ENCODE measurements at regions of chr14 and their contacts with region 1.

Region 1: DNA sequence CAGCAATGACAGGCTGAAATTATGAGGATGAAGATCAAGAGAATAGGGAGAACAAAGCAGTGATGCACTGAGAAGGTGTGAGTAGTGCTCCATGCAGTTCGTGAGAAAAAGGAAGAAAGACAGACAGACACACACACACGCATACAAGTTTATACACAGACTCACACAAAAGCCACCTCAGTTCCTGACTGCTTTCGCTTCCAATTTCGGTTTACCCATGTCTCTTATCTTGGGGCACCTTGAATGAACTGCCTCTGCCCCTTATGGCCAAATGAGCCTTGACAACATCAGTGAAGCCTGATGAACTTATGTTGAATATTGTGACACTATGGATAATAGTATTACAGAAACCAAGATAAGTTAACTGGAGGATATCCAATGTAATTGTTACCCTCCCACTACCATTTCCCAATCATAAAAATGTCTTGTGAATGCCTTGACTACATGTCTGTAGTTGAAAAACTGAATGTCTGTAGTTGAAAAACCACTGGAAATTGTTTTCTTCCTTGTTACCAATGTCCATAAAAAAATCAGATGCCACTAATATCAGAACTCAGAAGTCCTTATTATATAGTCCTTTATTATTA is 380.4 kb upstream of the DDHD1 start:
- DNase-seq: no peak
- H3K4me3 ChIP-seq: no peak overlapping the region
- H3K27ac ChIP-seq: no peak overlapping the region
- H3K4me1 ChIP-seq: no peaks in the 10 kb centered on the region
- H3K27me3 ChIP-seq: no peaks in the 10 kb centered on the region
- CTCF ChIP-seq: no peak
- POLR2A ChIP-seq: no peak

Region 2: GRCh38 chr14:53355581-53356112 is 177.8 kb before region 1 on chr14:
- intact Hi-C with region 1: no loop called
- DNase-seq: no peak
- H3K4me3 ChIP-seq: no peak overlapping the region
- H3K27ac ChIP-seq: peak overlapping the region in 1 of 8 donors; percentile 1
- H3K4me1 ChIP-seq: no peaks in the 10 kb centered on the region
- H3K27me3 ChIP-seq: no peaks in the 10 kb centered on the region
- CTCF ChIP-seq: no peak
- POLR2A ChIP-seq: no peak

Region 3: GRCh38 chr14:54175298-54175942 is 641.9 kb after region 1 on chr14:
- intact Hi-C with region 1: loop called (anchors 5 kb)
- DNase-seq: no peak
- H3K4me3 ChIP-seq: no peak overlapping the region
- H3K27ac ChIP-seq: no peak overlapping the region
- H3K4me1 ChIP-seq: peaks cover 0 to 16% (median 5%) of the 10 kb centered on the region in 6 donors
- H3K27me3 ChIP-seq: peaks cover 0 to 67% (median 8%) of the 10 kb centered on the region in 7 donors
- CTCF ChIP-seq: peak; percentile 31 to 83 (median 71)
- POLR2A ChIP-seq: no peak